PC-9 (cell line): ENCODE measurements at regions of chr2 and their contacts with region 1.

Region 1: GRCh38 chr2:85635636-85636035 is 19.6 kb downstream of the USP39 start:
- DNase-seq: no peak
- H3K4me3 ChIP-seq: no peak overlapping the region
- H3K27ac ChIP-seq: no peak overlapping the region
- H3K4me1 ChIP-seq: no peaks in the 10 kb centered on the region
- H3K27me3 ChIP-seq: no peaks in the 10 kb centered on the region
- CTCF ChIP-seq: no peak

Region 2: DNA sequence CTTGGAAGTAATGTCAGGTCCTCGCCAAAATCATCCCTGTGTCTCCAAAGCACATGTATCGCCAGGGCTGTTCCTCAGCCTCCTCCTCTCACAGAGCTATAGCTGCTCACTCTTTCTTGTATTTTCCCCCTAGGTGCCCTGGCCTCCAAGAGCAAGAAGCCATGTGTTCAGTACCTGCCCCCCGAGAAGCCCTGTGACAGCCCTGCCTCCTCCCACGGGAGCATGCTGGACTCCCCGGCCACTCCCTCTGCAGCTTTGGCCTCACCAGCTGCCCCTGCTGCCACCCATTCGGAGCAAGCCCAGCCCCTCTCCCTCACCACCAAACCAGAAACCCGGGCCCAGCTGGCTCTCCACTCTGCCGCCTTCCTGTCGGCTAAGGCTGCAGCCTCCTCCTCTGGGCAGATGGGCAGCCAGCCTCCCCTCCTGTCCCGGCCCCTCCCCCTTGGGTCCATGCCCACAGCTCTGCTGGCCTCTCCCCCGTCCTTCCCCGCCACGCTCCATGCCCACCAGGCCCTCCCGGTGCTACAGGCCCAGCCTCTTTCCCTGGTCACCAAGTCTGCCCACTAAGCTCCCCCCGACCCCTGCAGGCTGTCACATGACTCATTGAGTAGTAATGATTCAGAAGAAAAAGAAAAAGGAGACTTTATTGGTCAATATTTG is 326.6 kb before region 1 on chr2:
- CTCF ChIA-PET with region 1: no interaction called
- POLR2A ChIA-PET with region 1: interaction called, 11 read pairs
- intact Hi-C with region 1: no loop called
- DNase-seq: no peak
- H3K4me3 ChIP-seq: no peak overlapping the region
- H3K27ac ChIP-seq: no peak overlapping the region
- H3K4me1 ChIP-seq: no peaks in the 10 kb centered on the region
- H3K27me3 ChIP-seq: no peaks in the 10 kb centered on the region
- CTCF ChIP-seq: no peak

Region 3: DNA sequence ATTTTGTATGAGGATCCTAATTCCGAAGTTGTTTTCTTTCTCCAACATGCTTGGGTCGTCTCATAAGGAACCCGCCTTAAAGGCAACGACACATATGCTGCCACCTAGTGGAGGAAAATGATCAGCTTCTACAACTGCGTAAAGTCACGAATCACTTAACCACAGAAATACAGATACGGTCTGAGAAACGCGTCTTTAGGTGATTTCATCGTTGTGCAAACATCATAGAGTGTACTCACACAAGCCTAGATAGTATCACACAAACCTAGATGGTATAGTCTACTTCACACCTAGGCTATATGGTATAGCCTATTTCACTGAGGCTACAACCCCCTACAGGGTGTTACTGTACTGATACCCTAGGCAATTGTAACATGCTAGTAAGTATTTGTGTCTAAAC is 71.7 kb after region 1 on chr2:
- CTCF ChIA-PET with region 1: interaction called, 3 read pairs
- POLR2A ChIA-PET with region 1: no interaction called
- intact Hi-C with region 1: loop called (anchors 2 kb)
- DNase-seq: peak; percentile 64 to 94
- H3K4me3 ChIP-seq: no peak overlapping the region
- H3K27ac ChIP-seq: peak overlapping the region; percentile 95
- H3K4me1 ChIP-seq: peaks cover 46% of the 10 kb centered on the region
- H3K27me3 ChIP-seq: no peaks in the 10 kb centered on the region
- CTCF ChIP-seq: peak; percentile 86

Region 4: GRCh38 chr2:85822766-85823165 is 187.1 kb after region 1 on chr2:
- CTCF ChIA-PET with region 1: no interaction called
- POLR2A ChIA-PET with region 1: no interaction called
- intact Hi-C with region 1: no loop called
- DNase-seq: no peak
- H3K4me3 ChIP-seq: no peak overlapping the region
- H3K27ac ChIP-seq: no peak overlapping the region
- H3K4me1 ChIP-seq: peaks cover 3% of the 10 kb centered on the region; the same call in 1 of the 2 replicates
- H3K27me3 ChIP-seq: no peaks in the 10 kb centered on the region
- CTCF ChIP-seq: no peak